ENCODE measurements at regions of chr15 and their contacts with region 1.

Region 1: DNA sequence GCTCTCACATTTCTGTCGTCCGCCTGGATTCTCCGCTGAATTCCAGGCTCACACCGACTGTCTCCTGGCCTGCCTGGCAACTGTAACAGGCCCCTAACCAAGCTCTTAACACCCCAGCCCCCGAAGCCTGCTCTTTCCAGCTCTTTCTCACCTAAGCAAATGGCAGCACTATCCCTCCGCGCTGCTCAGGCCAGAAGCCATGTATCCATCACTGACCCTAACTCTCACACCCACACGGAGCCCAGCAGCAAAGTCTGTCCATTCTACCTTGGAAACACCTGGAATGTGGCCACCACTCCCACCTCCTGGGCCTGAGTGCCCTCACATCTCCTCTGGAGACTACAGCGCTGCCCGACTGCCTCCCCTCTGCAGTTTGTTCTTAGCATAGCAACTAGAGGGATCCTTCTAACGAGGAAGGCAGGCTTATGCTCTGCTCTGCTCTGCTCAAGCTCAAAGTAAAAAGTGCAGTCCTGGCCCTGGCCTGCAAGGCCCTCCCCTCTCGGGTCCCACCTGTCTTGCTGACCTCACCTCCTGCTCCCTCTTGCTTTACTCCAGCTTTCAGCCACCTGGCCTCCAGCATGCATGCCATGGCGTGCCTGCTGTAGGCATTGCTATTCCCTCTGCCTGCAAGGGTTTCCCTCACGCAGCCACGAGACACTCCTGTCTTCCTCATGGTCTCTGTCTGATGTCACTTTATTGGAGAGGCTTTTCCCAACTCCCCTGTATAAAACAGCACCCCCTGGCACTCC is 27.2 kb downstream of the FEM1B start:
- DNase-seq: peak; percentile 87
- H3K4me3 ChIP-seq: no peak overlapping the region
- H3K27ac ChIP-seq: peak overlapping the region; percentile 73
- H3K4me1 ChIP-seq: peaks cover 29% of the 10 kb centered on the region
- H3K27me3 ChIP-seq: no peaks in the 10 kb centered on the region
- CTCF ChIP-seq: peak in 1 of 2 donors; percentile 12

Region 2: GRCh38 chr15:68163191-68163590 is 141.6 kb before region 1 on chr15:
- CTCF ChIA-PET with region 1: no interaction called
- dilution Hi-C with region 1: no loop called
- in situ Hi-C with region 1: no loop called
- intact Hi-C with region 1: no loop called
- DNase-seq: no peak
- H3K4me3 ChIP-seq: no peak overlapping the region
- H3K27ac ChIP-seq: no peak overlapping the region
- H3K4me1 ChIP-seq: no peaks in the 10 kb centered on the region
- H3K27me3 ChIP-seq: no peaks in the 10 kb centered on the region
- CTCF ChIP-seq: no peak

Region 3: DNA sequence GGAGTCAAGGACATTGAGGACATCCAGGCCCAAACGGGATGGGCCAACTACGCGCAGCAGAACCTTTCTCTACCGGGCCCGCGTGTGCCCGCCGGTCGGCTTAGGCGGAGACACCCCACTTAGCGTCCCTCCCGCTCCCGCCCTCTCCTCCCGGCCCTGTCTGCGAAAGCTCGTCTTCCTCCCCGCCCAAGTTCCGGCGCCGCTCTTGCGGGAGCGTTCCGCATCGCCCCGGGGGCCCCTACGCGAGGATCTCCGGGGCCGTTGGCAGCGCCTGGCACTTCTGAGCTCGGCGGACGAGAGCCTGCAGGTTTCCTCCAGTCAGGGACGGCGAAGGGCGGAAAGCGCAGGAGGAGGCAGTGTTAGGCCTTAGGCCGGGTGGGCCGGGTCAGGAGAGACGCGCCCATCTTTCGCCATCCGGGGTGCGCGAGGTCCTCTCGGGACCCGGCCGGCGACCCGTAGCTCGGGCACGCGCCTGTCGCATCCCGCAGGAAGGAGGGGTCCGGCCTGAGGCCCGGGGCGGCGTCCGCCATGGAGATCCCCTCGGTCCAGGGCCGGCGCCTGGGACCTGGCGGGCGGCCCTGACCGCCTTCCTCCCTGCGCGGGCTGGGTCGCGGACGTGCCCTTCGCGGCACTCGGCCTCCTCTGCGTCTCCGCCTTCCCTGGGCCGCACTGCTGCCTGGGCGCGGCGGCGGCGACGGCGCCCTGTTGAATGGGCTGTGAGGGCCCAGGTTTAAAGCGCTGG is 27.0 kb before region 1 on chr15 and contains the start of gene FEM1B:
- CTCF ChIA-PET with region 1: interaction called, 4 read pairs
- dilution Hi-C with region 1: no loop called
- in situ Hi-C with region 1: no loop called
- intact Hi-C with region 1: loop called (anchors 1 kb)
- DNase-seq: peak; percentile 95
- H3K4me3 ChIP-seq: peak within 1 kb of the TSS; percentile 83 to 98 (median 88)
- H3K27ac ChIP-seq: peak within 1 kb of the TSS; percentile 96
- H3K4me1 ChIP-seq: peaks cover 42% of the 10 kb centered on the region
- H3K27me3 ChIP-seq: no peaks in the 10 kb centered on the region
- CTCF ChIP-seq: no peak
- total RNA-seq, gene FEM1B: 86.6 to 105 TPM

Region 4: GRCh38 chr15:68383161-68384074 is 78.7 kb after region 1 on chr15:
- CTCF ChIA-PET with region 1: interaction called, 7 read pairs
- dilution Hi-C with region 1: loop called (anchors 5 kb)
- in situ Hi-C with region 1: loop called in 1 of 2 experiments (anchors 10 kb)
- intact Hi-C with region 1: loop called (anchors 1 kb)
- DNase-seq: peak; percentile 43
- H3K4me3 ChIP-seq: no peak overlapping the region
- H3K27ac ChIP-seq: no peak overlapping the region
- H3K4me1 ChIP-seq: peaks cover 18% of the 10 kb centered on the region
- H3K27me3 ChIP-seq: no peaks in the 10 kb centered on the region
- CTCF ChIP-seq: peak; percentile 80 to 95

Region 5: DNA sequence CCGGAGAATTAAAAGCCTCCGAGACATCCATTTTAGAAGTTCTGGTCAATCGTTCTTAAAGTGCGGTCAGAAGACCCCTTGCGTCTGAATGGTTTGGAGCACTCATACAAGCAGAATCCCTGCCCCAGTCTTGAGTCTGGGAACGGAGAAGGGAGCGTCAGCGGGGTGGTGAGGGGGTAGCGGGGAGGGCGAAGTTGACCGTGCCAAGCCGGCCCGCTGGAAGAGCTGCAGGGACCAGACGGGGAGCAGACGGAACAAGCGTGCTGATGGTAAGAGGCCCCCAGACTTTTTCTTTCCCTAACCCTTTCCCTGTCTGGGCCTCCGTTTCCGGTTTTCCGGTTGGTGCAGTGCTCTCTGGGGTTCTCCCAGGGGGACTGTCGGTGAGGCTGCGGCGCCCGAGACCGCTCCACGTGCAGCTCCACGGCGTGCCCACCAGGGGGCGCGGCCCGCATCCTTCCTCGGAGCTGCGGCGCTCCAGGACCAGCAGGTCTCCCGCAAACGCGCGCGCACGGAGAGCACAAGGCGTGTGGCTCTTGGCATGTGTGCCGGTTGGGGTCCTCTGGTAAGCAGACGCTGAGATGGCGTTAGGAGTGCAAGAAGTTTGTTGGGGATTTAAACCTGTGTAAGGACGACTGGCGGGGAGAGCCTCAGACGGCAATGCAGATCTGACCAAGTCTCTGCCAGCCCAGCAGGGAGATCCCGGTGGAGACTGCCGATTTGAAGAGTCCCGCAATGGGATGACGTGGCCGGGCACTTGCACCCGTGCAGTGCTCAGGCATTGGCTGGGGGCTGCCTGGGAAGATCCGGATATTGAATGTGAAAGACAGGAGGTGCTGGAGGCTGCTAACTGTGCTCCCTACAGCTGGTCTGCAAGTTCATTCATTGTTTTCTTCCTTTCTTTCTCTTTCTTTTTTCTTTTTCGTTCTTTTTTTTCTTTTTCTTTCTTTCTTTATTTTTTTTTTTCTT is 254.9 kb after region 1 on chr15:
- CTCF ChIA-PET with region 1: interaction called, 7 read pairs
- dilution Hi-C with region 1: no loop called
- in situ Hi-C with region 1: loop called in 1 of 2 experiments (anchors 5 kb)
- intact Hi-C with region 1: loop called (anchors 2 kb)
- DNase-seq: peak; percentile 57
- H3K4me3 ChIP-seq: peak overlapping the region; percentile 1 to 46 (median 38)
- H3K27ac ChIP-seq: no peak overlapping the region
- H3K4me1 ChIP-seq: peaks cover 20% of the 10 kb centered on the region
- H3K27me3 ChIP-seq: no peaks in the 10 kb centered on the region
- CTCF ChIP-seq: peak; percentile 72 to 96

Region 6: GRCh38 chr15:68875377-68876116 is 570.8 kb after region 1 on chr15:
- CTCF ChIA-PET with region 1: interaction called, 4 read pairs
- dilution Hi-C with region 1: no loop called
- in situ Hi-C with region 1: no loop called
- intact Hi-C with region 1: loop called (anchors 2 kb)
- DNase-seq: peak; percentile 73
- H3K4me3 ChIP-seq: peak overlapping the region; percentile 9 to 26 (median 10)
- H3K27ac ChIP-seq: no peak overlapping the region
- H3K4me1 ChIP-seq: peaks cover 5% of the 10 kb centered on the region
- H3K27me3 ChIP-seq: no peaks in the 10 kb centered on the region
- CTCF ChIP-seq: peak; percentile 86 to 90

Measured in mammary epithelial cell (primary cell).